HEK293 (cell line): ENCODE measurements at regions of chr3 and their contacts with region 1.

Region 1: DNA sequence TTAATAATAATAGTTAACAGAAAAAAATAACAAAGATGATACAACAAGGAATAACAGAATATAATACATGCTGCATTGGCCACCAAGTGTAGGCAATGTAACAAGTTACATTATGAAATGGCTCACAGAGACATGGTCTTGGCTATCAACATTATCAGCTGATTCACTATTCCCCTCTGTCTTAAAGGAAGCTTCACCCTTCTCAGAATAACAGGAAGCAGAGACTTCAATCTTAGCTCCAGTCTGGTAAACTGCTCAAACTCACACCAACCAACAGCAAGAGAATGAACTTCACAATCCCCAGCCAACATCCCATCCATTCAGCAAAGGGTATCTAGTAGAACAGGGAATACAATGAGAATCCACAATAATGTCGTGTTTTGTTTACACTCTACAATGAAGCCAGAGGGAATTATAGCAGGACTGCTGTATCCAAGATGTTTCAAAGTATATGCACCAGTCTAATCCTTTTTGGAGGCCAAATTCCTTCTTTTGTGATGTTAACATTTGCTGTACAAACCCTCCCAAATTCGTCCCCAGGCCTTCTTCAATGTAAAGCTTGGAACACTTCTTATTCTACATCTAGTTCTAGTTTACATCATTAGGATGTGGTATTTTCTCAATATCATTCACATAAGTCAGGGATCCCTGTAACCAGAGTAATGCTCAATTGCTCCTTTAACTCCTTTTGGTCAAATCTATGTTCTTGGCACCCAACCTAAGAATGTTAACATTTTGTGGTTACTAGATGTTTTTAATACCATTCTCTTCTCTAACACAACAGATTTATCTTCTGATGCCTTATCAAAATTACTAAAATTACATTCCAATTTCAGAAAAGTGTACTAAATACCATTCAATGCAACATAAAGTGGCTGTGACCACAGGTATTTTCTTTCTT is 52.4 kb upstream of the CMSS1 start:
- H3K4me3 ChIP-seq: no peak overlapping the region
- H3K27ac ChIP-seq: no peak overlapping the region
- H3K4me1 ChIP-seq: no peaks in the 10 kb centered on the region
- CTCF ChIP-seq: no peak

Region 2: GRCh38 chr3:99753268-99753975 is 11.9 kb before region 1 on chr3:
- CTCF ChIA-PET with region 1: interaction called, 16 read pairs
- POLR2A ChIA-PET with region 1: no interaction called
- H3K4me3 ChIP-seq: no peak overlapping the region
- H3K27ac ChIP-seq: no peak overlapping the region
- H3K4me1 ChIP-seq: no peaks in the 10 kb centered on the region; the same call in 1 of the 2 replicates
- CTCF ChIP-seq: 0 out of 2 replicates have a peak, but pooled peaks have one; percentile 37